ENCODE measurements at regions of chr15 and their contacts with region 1.

Region 1: GRCh38 chr15:80173022-80173759 is 20.4 kb downstream of the FAH start:
- DNase-seq: no peak
- H3K4me3 ChIP-seq: no peak overlapping the region
- H3K27me3 ChIP-seq: no peaks in the 10 kb centered on the region
- CTCF ChIP-seq: peak; percentile 70

Region 2: DNA sequence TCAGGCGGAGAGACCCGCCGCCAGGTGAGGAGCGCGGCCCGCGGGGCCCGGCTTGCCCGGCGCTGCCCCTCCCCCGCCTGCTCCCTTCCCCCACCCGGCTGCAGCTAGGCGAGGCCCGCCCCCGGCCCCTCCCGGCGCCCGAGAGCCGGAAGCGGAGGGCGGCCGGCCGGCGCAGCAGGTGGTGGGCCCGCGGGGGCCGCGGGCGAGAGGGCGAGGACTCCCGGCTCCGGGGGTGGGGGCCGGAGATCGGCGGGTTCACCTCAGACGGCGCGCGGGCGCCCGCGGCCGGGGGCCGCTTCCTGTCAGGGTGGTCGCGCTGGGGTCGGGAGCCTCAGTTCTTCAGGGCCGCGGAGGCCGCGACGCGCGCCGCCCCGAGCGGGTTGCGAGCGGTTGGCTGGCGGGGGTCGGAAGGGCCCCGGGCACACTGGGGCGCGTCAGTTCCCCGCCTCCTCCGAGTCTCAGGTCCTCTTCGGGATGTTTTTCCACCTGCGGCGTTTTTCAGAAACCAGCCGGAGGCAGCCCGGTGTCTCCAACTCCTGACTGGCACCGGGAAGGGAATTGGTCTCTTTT is 113.3 kb before region 1 on chr15:
- CTCF ChIA-PET with region 1: interaction called, 11 read pairs
- POLR2A ChIA-PET with region 1: no interaction called
- DNase-seq: no peak
- H3K4me3 ChIP-seq: peak overlapping the region; percentile 68
- H3K27me3 ChIP-seq: no peaks in the 10 kb centered on the region
- CTCF ChIP-seq: no peak

Region 3: GRCh38 chr15:80160570-80161156 is 12.5 kb before region 1 on chr15:
- CTCF ChIA-PET with region 1: interaction called, 38 read pairs
- POLR2A ChIA-PET with region 1: no interaction called
- DNase-seq: peak; percentile 65
- H3K4me3 ChIP-seq: no peak overlapping the region
- H3K27me3 ChIP-seq: no peaks in the 10 kb centered on the region
- CTCF ChIP-seq: no peak